GM12878 (cell line): ENCODE measurements at regions of chr2 and their contacts with region 1.

Region 1: DNA sequence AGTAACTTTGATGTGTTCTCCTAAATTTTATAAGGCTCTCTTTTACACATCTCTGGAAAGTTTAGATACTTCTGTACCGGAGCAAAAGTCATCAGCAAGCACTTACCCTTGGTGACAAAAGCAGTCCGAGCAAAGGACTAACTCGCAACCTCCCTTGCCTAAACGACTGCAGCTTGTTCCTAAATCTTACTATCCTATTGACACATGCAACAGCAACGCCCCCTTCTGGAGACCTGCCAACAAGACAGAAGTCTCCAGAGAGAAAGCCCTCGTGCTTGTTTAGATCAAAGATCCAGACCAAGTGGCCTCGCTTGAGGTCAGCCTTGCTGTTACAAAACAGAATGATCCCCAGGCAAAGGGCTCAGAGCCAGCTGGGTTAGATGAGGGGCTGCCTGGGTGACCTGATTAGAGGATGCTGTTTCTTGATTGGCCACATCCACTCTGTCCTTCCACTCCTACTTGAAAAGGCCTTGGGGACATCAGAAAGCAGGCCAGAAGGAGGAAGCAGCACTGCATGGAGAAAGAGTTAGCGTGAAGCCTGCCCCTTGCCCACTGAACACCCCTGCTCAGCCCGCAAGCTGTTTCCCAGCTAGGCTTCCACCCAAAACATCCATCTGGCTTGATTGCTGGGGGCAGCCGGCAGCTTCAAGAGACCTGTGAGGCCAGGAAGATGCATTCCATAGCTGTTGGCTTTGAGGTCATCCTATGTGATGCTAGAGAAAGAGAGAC is 94.3 kb downstream of the HNRNPLL start:
- DNase-seq: peak; percentile 45
- ATAC-seq: peak; percentile 98
- H3K4me3 ChIP-seq: no peak overlapping the region
- H3K27ac ChIP-seq: no peak overlapping the region
- H3K4me1 ChIP-seq: no peaks in the 10 kb centered on the region
- H3K27me3 ChIP-seq: no peaks in the 10 kb centered on the region
- CTCF ChIP-seq: peak; percentile 72 to 85 (median 80); a peak in 5 of 6 replicates
- EP300 ChIP-seq: no peak
- POLR2A ChIP-seq: no peak
- RAD21 ChIP-seq: peak; percentile 98

Region 2: DNA sequence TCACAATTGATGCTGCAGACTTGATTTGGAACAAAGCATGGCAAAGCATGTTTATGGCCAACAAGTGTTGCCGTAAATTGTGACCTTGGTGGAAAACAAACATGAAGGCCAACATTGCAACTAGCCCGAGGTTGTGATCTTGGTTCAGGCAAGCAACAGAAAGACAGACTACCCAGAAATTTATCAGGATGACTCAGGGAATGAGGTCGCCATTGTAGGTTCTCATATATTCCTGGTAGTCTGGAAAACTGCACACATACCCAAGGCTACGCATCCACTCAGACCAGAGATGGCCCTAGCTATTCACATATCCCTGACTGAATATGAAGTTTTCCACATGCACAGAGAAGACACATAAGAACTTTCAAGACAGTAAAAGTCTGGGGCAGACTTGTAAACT is 462.7 kb before region 1 on chr2:
- CTCF ChIA-PET with region 1: no interaction called
- POLR2A ChIA-PET with region 1: no interaction called
- RAD21 ChIA-PET with region 1: no interaction called
- SMC1A ChIA-PET with region 1: no interaction called
- in situ Hi-C with region 1: no loop called
- intact Hi-C with region 1: no loop called
- DNase-seq: no peak
- ATAC-seq: no peak
- H3K4me3 ChIP-seq: no peak overlapping the region
- H3K27ac ChIP-seq: no peak overlapping the region
- H3K4me1 ChIP-seq: no peaks in the 10 kb centered on the region
- H3K27me3 ChIP-seq: no peaks in the 10 kb centered on the region
- CTCF ChIP-seq: no peak
- EP300 ChIP-seq: no peak
- POLR2A ChIP-seq: no peak
- RAD21 ChIP-seq: no peak

Region 3: DNA sequence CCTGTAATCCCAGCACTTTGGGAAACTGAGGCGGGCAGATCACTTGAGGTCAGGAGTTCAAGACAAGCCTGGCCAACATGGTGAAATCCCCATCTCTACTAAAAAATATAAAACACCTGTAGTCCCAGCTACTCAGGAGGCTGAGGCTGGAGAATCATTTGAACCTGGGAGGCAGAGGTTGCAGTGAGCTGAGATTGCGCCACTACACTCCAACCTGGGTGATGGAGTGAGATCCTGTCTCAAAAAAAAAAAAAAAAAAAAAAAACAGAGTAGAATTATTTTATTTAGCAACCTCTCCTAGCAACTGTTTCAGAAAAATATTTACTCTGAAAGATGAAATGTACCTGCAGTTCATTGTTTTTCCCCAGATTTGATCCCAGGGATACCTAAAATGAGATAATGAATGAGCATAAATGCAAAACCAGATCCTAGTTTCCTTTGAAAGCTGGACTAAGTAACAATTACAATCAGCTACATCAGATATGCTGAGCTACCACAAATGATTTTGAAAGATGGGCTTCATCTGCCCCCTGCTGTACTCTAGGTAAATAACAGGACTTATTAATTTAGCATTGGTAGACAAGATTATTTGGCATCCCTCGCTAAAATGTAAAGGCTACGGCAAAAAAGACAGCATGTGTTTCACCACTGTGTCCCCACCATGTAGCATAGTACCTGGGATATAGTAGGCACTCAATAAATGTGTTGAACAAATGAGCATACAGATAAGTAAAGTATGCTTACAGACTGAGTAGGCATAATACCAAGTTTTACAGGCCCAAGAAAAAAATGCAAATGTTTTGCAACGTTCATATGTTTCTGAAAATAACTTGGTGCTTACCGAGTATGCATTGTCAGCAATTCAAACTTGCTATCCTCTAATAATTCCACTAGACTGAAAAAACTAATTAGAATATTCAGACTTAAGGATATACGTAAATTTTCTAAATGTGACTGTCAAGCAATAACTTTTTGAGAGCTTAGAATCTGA is 233.9 kb before region 1 on chr2:
- CTCF ChIA-PET with region 1: interaction called, 29 read pairs
- POLR2A ChIA-PET with region 1: no interaction called
- RAD21 ChIA-PET with region 1: interaction called, 14 read pairs
- SMC1A ChIA-PET with region 1: interaction called, 38 read pairs
- in situ Hi-C with region 1: no loop called
- intact Hi-C with region 1: no loop called
- DNase-seq: peak; percentile 65
- ATAC-seq: peak; percentile 89
- H3K4me3 ChIP-seq: no peak overlapping the region
- H3K27ac ChIP-seq: no peak overlapping the region
- H3K4me1 ChIP-seq: no peaks in the 10 kb centered on the region
- H3K27me3 ChIP-seq: no peaks in the 10 kb centered on the region
- CTCF ChIP-seq: peak; percentile 53 to 79 (median 63); a peak in 5 of 6 replicates
- EP300 ChIP-seq: no peak
- POLR2A ChIP-seq: no peak
- RAD21 ChIP-seq: peak; percentile 93

Region 4: DNA sequence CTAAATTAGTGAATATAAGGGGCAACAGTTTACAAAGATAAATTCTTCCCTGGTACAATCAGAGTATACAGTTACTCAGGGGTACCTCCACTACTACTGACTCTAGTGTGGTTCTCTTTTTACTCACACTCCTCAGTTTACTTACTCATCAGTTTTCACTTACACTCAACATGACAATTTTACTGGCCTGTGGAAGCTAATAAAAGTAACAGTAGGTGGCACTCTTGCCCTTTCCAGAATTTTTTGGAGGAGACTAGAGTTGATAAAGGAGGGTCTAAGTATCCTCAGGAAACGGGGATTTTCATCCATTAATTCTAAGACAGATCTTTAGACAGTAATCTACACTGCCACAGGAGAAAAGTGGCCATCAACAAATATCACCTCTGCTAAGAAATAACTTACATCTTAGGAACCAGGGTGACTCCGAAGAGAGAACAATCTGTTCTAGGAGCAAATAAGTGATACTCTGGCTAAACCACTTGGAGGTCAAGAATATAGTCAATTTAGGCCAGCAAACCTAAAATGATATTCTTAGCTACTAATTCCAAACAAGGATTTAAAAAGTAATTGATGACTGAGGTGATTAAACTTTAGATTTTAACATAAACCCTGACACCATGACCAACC is 192.7 kb before region 1 on chr2:
- CTCF ChIA-PET with region 1: interaction called, 194 read pairs
- POLR2A ChIA-PET with region 1: interaction called, 5 read pairs
- RAD21 ChIA-PET with region 1: interaction called, 79 read pairs
- SMC1A ChIA-PET with region 1: interaction called, 103 read pairs
- in situ Hi-C with region 1: loop called (anchors 5 kb)
- intact Hi-C with region 1: loop called (anchors 1 kb)
- DNase-seq: peak; percentile 11
- ATAC-seq: peak; percentile 76
- H3K4me3 ChIP-seq: no peak overlapping the region
- H3K27ac ChIP-seq: no peak overlapping the region
- H3K4me1 ChIP-seq: no peaks in the 10 kb centered on the region
- H3K27me3 ChIP-seq: no peaks in the 10 kb centered on the region
- CTCF ChIP-seq: peak; percentile 57 to 66 (median 66)
- EP300 ChIP-seq: no peak
- POLR2A ChIP-seq: no peak
- RAD21 ChIP-seq: peak; percentile 90

Region 5: DNA sequence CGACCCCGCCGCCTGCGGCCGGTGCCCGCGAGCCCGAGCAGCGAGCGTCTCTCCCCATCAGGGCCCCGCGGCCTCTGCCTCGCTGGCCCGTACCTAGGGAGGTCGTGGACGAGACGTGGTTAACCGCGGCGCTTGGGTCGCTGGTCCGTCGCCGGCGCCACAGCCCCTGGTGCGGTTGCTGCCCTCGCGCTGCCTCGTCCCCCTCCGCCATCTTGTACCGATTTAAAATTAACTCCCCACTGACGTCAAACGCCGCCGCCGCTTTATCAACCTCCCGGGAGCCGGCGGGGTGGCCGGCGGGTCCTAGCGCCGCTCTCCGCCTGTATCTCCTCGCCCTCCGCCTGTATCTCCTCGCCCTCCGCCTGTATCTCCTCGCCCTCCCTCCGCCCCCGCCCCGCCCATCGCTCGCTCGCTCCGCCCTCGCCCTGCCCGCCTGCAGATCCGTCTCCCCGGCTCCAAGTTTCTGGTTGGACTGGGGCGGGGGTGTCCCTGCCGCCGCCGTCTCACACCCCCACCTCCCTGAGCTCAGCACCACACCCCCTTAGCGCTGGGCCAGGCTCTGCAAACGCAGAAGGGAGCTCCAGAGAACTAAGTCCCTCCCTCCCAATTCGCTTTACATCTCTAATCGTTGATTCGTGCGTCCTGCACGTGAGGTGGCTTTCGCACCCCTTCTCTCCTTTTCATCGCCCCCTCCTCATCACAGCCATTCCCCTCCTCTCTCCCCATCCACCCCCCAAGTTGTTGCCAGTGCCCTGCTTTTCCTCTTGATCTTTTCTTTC is 131.2 kb before region 1 on chr2 and contains the start of gene ATL2:
- CTCF ChIA-PET with region 1: interaction called, 24 read pairs
- POLR2A ChIA-PET with region 1: no interaction called
- RAD21 ChIA-PET with region 1: interaction called, 30 read pairs
- SMC1A ChIA-PET with region 1: interaction called, 44 read pairs
- in situ Hi-C with region 1: no loop called
- intact Hi-C with region 1: loop called (anchors 2 kb)
- DNase-seq: peak; percentile 59
- ATAC-seq: peak; percentile 86
- H3K4me3 ChIP-seq: peak within 1 kb of the TSS; percentile 90
- H3K27ac ChIP-seq: peak within 1 kb of the TSS; percentile 92
- H3K4me1 ChIP-seq: no peaks in the 10 kb centered on the region
- H3K27me3 ChIP-seq: no peaks in the 10 kb centered on the region
- CTCF ChIP-seq: no peak
- EP300 ChIP-seq: no peak; a peak in 1 of 4 replicates
- POLR2A ChIP-seq: peak; percentile 86
- RAD21 ChIP-seq: no peak
- polyA plus RNA-seq, gene ATL2: 8.6 to 12.6 TPM

Region 6: DNA sequence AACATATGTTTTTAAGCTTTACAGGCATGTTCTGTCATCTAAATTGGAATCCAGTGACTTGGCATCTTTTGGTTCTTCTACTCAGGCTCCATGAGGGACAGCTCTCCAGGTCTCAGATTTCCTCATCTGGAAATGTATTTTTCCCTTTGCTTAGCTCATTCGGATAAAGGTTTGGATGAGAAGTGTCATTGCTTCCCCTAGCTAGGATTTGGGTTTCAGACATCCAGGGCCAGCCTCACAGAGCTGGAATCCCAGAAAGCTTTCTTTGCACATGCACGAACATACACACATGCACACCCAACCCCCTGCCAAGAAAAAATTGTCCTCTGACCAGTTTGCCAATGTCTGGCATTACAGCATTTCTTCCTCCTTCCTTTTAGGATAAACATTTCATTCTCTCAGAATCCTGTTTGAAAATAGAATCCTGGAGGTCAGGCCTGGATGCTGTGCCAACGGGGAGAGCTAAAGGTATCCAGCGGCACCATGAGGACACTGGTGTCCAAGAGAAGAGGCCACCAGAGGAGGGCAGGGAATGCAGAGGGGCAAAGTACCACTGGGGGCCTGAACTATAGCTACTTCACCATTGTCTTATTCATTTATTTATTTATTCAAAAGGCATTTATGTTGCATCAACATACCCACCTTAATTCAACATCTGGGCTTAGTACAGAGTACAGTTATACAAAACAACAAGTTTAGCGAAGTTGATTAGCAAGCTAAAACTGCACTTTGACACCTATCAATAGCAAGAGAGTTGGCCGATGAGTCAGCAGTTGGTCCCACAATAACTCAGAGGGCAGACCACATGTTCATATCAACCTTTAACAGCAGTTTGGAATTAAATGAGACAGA is 33.5 kb before region 1 on chr2:
- CTCF ChIA-PET with region 1: interaction called, 18 read pairs
- POLR2A ChIA-PET with region 1: no interaction called
- RAD21 ChIA-PET with region 1: interaction called, 6 read pairs
- SMC1A ChIA-PET with region 1: interaction called, 19 read pairs
- in situ Hi-C with region 1: no loop called
- intact Hi-C with region 1: no loop called
- DNase-seq: no peak
- ATAC-seq: peak; percentile 57
- H3K4me3 ChIP-seq: no peak overlapping the region
- H3K27ac ChIP-seq: no peak overlapping the region
- H3K4me1 ChIP-seq: peaks cover 16% of the 10 kb centered on the region
- H3K27me3 ChIP-seq: no peaks in the 10 kb centered on the region
- CTCF ChIP-seq: no peak
- EP300 ChIP-seq: no peak
- POLR2A ChIP-seq: no peak
- RAD21 ChIP-seq: no peak

Region 7: GRCh38 chr2:38535744-38536506 is 27.4 kb after region 1 on chr2:
- CTCF ChIA-PET with region 1: interaction called, 27 read pairs
- POLR2A ChIA-PET with region 1: no interaction called
- RAD21 ChIA-PET with region 1: no interaction called
- SMC1A ChIA-PET with region 1: no interaction called
- in situ Hi-C with region 1: no loop called
- intact Hi-C with region 1: no loop called
- DNase-seq: no peak
- ATAC-seq: peak; percentile 91
- H3K4me3 ChIP-seq: 0 out of 2 replicates have a peak overlapping the region, but pooled peaks have one; percentile 8
- H3K27ac ChIP-seq: no peak overlapping the region
- H3K4me1 ChIP-seq: peaks cover 14% of the 10 kb centered on the region
- H3K27me3 ChIP-seq: no peaks in the 10 kb centered on the region
- CTCF ChIP-seq: peak; percentile 73 to 87 (median 87)
- EP300 ChIP-seq: no peak
- POLR2A ChIP-seq: no peak
- RAD21 ChIP-seq: peak; percentile 75

Region 8: GRCh38 chr2:39227628-39228412 is 719.3 kb after region 1 on chr2:
- CTCF ChIA-PET with region 1: no interaction called
- POLR2A ChIA-PET with region 1: no interaction called
- RAD21 ChIA-PET with region 1: no interaction called
- SMC1A ChIA-PET with region 1: no interaction called
- in situ Hi-C with region 1: no loop called
- intact Hi-C with region 1: no loop called
- DNase-seq: peak; percentile 28
- ATAC-seq: peak; percentile 93
- H3K4me3 ChIP-seq: no peak overlapping the region
- H3K27ac ChIP-seq: no peak overlapping the region
- H3K4me1 ChIP-seq: peaks cover 3% of the 10 kb centered on the region; the same call in 1 of the 2 replicates
- H3K27me3 ChIP-seq: no peaks in the 10 kb centered on the region
- CTCF ChIP-seq: peak; percentile 78 to 89 (median 79); a peak in 5 of 6 replicates
- EP300 ChIP-seq: no peak
- POLR2A ChIP-seq: no peak
- RAD21 ChIP-seq: peak; percentile 90

Region 9: DNA sequence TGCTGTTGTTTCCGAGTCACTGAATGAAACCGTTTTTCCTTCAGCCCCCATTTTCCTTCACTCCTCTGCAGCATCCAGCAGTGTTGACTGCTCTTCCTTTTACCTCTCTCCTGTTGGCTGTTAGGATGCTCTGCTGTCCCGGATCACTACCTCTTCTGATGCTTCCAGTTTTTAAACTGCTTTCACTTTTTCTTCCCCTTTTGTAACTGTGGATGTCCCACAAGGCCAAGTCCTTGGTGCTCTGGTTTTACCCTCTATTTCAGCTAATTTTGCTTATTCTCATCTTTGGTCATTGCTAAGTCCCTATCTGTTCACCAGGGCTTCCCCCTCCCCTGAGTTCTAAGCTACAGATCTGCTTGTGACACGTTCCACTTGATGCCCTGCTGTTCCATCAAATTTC is 968.0 kb after region 1 on chr2:
- CTCF ChIA-PET with region 1: no interaction called
- POLR2A ChIA-PET with region 1: no interaction called
- RAD21 ChIA-PET with region 1: no interaction called
- SMC1A ChIA-PET with region 1: no interaction called
- in situ Hi-C with region 1: no loop called
- intact Hi-C with region 1: no loop called
- DNase-seq: no peak
- ATAC-seq: peak; percentile 62
- H3K4me3 ChIP-seq: no peak overlapping the region
- H3K27ac ChIP-seq: peak overlapping the region; percentile 30; the same call in 1 of the 2 replicates
- H3K4me1 ChIP-seq: peaks cover 12% of the 10 kb centered on the region; the same call in 1 of the 2 replicates
- H3K27me3 ChIP-seq: no peaks in the 10 kb centered on the region
- CTCF ChIP-seq: no peak
- EP300 ChIP-seq: no peak
- POLR2A ChIP-seq: no peak
- RAD21 ChIP-seq: no peak

Region 10: GRCh38 chr2:39954346-39954745 is 1445.9 kb after region 1 on chr2:
- CTCF ChIA-PET with region 1: no interaction called
- POLR2A ChIA-PET with region 1: no interaction called
- RAD21 ChIA-PET with region 1: no interaction called
- SMC1A ChIA-PET with region 1: no interaction called
- in situ Hi-C with region 1: no loop called
- intact Hi-C with region 1: no loop called
- DNase-seq: no peak
- ATAC-seq: no peak
- H3K4me3 ChIP-seq: no peak overlapping the region
- H3K27ac ChIP-seq: no peak overlapping the region
- H3K4me1 ChIP-seq: no peaks in the 10 kb centered on the region
- H3K27me3 ChIP-seq: no peaks in the 10 kb centered on the region
- CTCF ChIP-seq: no peak
- EP300 ChIP-seq: no peak
- POLR2A ChIP-seq: no peak
- RAD21 ChIP-seq: no peak